Heart right ventricle (tissue), 16 donors: ENCODE measurements at regions of chr14 and their contacts with region 1.

Region 1: DNA sequence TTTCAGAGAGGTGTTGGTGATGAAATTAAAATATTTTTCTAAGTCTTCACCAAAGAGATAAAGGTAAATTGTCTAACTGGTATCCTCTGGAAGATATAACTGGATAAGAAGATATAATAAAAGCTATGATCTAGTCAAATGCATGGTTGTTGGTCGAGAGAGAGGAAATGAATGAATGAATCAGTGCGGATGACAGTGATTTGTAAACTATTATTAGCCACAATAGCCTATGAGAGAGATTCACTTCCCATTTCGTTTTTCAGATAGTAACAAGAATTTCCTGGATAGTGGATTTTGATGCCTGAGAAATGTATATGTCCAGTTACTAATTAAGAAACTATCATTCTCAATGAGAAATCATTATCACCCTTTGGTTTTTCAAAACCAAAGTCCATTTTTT is 63.1 kb downstream of the HEATR5A start:
- DNase-seq: no peak
- ATAC-seq: no peak
- H3K4me3 ChIP-seq: no peak overlapping the region
- H3K27ac ChIP-seq: no peak overlapping the region
- H3K4me1 ChIP-seq: peaks cover 0 to 12% (median 0%) of the 10 kb centered on the region in 9 donors
- H3K27me3 ChIP-seq: no peaks in the 10 kb centered on the region
- CTCF ChIP-seq: no peak

Region 2: DNA sequence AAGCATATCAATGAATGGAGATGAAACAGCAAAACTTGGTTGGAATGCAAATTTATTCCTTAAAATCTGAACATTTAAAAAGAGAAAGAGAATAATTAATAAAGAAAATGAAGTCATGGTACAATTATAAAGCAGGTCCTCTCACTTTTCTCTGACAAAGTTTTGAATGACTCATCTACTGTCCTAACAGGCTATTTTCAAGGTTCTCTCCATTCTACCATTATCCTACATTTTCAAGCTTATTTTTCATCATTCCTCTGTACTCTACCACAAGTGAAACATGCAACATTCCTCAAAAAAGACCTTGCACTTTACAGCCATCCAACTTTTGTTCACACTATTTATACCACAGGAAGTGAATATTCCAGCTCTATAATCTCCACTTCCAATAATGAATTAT is 368.8 kb before region 1 on chr14:
- intact Hi-C with region 1: loop called in 2 of 10 experiments (anchors 10 kb)
- DNase-seq: no peak
- ATAC-seq: no peak
- H3K4me3 ChIP-seq: no peak overlapping the region
- H3K27ac ChIP-seq: no peak overlapping the region
- H3K4me1 ChIP-seq: peaks cover 0 to 49% (median 22%) of the 10 kb centered on the region in 9 donors
- H3K27me3 ChIP-seq: no peaks in the 10 kb centered on the region
- CTCF ChIP-seq: no peak

Region 3: GRCh38 chr14:31137214-31137889 is 219.9 kb before region 1 on chr14:
- intact Hi-C with region 1: loop called in 3 of 10 experiments (anchors 10 kb)
- DNase-seq: no peak
- ATAC-seq: no peak
- H3K4me3 ChIP-seq: no peak overlapping the region
- H3K27ac ChIP-seq: no peak overlapping the region
- H3K4me1 ChIP-seq: no peaks in the 10 kb centered on the region
- H3K27me3 ChIP-seq: no peaks in the 10 kb centered on the region
- CTCF ChIP-seq: no peak

Region 4: DNA sequence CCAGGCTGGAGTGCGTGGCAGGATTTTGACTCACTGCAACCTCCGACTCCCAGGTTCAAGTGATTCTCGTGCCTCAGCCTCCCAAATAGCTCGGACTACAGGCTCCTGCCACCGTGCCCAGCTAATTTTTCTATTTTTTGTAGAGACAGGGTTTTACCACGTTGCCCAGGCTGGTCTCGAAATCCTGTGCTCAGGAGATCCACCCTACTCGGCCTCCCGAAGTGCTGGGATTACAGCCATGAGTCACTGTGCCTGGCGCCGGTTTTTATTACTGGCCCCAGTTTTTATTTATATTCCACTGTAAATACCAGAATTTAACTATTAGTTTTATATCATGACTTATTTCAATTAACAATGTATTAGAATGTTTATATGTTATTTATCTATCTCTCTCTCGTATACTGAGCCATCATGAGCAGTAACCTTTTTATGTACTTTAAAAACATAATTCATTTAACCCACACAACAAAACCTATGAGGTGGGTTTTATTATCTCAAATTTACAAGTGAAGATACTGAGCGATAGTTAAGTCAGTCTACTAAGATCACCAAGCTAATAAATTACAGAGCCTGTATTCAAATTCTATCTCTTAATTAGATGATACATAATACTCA is 197.5 kb before region 1 on chr14:
- intact Hi-C with region 1: loop called in 2 of 10 experiments (anchors 10 kb)
- DNase-seq: no peak
- ATAC-seq: no peak
- H3K4me3 ChIP-seq: no peak overlapping the region
- H3K27ac ChIP-seq: no peak overlapping the region
- H3K4me1 ChIP-seq: peaks cover 0 to 9% (median 2%) of the 10 kb centered on the region in 9 donors
- H3K27me3 ChIP-seq: no peaks in the 10 kb centered on the region
- CTCF ChIP-seq: no peak